Activated CD8-positive, alpha-beta memory T cell treated with anti-CD3 and anti-CD28 coated beads, Interleukin-2, amount 10 ng/mL, durations not matched to agents 7 days and 5 days (primary cell): ENCODE measurements at regions of chr1 and their contacts with region 1.

Region 1: GRCh38 chr1:112390775-112391602 is 5.0 kb upstream of the CTTNBP2NL start:
- DNase-seq: peak; percentile 89
- ATAC-seq: peak; percentile 93
- H3K4me3 Mint-ChIP-seq: peak overlapping the region; percentile 76
- H3K27ac Mint-ChIP-seq: peak overlapping the region; percentile 72
- H3K4me1 Mint-ChIP-seq: peaks cover 48% of the 10 kb centered on the region
- H3K27me3 Mint-ChIP-seq: peaks cover 16% of the 10 kb centered on the region

Region 2: DNA sequence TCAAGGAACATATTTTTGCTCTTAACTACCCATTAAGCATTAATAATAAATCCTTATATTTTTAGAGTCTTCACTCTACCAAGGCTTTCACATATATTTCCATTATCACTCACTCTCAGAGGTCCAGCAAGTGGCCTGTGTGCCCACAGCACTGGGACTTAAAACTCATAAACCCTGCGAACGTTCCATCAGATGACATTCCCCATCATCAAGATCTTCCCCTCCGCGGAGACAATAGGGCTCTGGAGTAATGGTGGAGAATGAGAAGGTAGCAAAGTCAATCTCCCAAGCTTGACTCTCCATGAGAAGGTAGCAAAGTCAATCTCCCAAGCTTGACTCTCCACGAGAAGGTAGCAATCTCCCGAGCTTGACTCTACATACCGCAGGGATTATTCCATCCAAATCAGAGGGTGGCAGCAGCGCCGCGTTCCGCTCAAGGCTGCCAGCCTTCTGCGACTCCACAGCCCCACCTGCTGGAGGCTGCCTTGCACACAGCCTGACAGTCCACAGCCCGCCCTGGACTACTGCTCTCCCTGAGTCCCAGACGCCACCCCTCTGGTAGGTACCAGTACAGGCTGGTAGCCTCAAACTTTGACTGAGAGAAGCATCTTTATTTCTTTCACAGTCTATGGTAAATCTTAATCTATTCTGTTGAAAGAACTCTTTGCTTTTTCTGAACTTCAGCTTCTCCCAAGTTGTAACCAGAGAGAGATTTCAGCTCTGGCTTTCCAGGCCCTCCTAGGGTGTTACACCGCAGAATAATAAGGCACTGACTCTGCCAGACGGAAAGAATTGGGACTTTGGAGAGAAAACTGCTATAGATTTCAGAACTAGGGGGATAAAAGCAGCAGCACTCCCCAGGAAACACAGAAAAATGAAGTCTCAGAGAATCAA is 21.4 kb before region 1 on chr1:
- CTCF ChIA-PET with region 1: interaction called, 10 read pairs
- DNase-seq: peak; percentile 86
- ATAC-seq: peak; percentile 99
- H3K4me3 Mint-ChIP-seq: no peak overlapping the region
- H3K27ac Mint-ChIP-seq: no peak overlapping the region
- H3K4me1 Mint-ChIP-seq: peaks cover 4% of the 10 kb centered on the region
- H3K27me3 Mint-ChIP-seq: peaks cover 56% of the 10 kb centered on the region

Region 3: DNA sequence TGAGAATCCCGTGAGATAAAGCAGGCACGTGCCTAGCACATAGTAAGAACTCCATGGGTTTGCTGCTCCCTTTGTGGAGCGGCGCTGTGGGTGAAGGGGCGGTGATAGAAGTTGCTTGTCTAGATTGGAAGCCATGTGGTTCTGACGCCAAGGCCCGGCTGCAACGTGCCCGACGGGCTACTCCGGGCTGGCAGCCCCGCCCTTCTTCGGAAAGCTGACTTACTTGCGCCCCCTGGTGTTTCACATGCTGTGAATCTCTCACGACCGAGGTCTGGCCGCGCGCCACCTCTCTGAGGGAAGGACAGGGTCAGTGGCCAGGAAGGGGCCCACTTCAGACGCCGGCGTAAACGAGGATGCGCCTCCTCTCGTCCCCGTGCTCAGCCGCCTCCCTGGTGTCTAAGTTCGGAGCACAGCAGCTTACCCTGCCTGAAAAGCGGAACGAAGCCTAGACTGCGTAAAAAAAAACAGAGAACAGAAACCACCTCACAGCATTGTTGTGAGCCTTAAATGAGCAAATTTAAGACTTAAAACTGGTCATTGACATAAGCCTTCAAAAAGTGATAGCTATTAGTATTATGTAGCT is 75.2 kb after region 1 on chr1:
- CTCF ChIA-PET with region 1: interaction called, 171 read pairs
- DNase-seq: peak; percentile 90
- ATAC-seq: peak; percentile 98
- H3K4me3 Mint-ChIP-seq: peak overlapping the region; percentile 76
- H3K27ac Mint-ChIP-seq: peak overlapping the region; percentile 52
- H3K4me1 Mint-ChIP-seq: peaks cover 13% of the 10 kb centered on the region
- H3K27me3 Mint-ChIP-seq: peaks cover 25% of the 10 kb centered on the region

Region 4: DNA sequence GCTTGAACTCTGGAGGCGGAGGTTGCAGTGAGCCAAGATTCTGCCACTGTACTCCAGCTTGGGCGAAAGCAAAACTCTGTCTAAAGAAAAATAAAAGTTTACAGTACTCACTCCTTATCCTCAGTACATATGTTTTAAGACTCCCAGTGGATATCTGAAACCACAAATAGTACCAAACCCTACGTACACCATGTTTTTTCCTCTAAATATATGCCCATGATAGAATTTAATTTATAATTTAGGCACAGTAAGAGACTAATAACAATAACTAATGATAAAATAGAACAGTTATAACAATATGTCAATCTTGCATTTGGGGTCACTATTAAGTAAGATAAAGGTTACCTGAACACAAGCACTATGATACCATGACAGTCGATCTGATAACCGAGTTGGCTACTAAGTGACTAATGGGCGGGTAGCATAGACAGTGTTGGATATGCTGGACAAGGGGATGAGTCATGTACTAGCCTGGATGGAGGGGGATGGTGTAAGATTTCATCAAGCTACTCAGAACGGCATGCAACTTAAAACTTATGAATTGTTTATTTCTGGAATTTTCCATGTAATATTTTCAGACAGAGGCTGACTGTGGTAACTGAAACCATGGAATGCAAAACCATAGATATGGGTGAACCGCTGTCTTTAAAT is 184.3 kb after region 1 on chr1:
- CTCF ChIA-PET with region 1: no interaction called
- DNase-seq: no peak
- ATAC-seq: no peak
- H3K4me3 Mint-ChIP-seq: no peak overlapping the region
- H3K27ac Mint-ChIP-seq: no peak overlapping the region
- H3K4me1 Mint-ChIP-seq: no peaks in the 10 kb centered on the region
- H3K27me3 Mint-ChIP-seq: no peaks in the 10 kb centered on the region

Region 5: DNA sequence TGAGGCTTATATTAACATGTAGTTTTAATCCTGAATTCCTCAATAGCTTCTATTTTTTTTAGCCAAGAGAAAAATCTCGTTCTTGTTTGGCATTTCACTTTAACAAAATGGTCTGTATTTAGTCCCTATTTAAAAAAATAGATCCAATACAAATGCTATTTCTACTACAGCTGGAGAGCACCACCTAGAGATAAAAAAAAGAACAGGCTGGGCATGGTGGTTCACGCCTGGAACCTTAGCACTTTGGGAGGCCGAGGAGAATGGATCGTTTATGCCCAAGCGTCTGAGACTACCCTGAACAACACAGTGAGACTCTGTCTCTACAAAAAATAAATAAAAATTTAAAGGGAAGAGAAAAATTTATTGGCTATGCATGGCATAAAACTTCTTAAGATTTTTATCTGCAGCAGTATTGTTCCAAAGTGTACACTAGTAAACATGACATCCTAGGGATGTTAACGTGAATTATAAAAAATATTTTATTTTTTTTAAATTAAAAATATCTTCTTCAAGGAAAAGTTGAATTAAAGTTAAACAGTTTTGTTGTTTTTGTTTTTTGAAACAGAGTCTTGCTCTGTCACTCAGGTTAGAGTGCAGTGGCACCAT is 223.6 kb after region 1 on chr1:
- CTCF ChIA-PET with region 1: interaction called, 38 read pairs
- DNase-seq: no peak
- ATAC-seq: no peak
- H3K4me3 Mint-ChIP-seq: no peak overlapping the region
- H3K27ac Mint-ChIP-seq: no peak overlapping the region
- H3K4me1 Mint-ChIP-seq: peaks cover 30% of the 10 kb centered on the region
- H3K27me3 Mint-ChIP-seq: no peaks in the 10 kb centered on the region

Region 6: GRCh38 chr1:112688781-112689193 is 297.8 kb after region 1 on chr1:
- CTCF ChIA-PET with region 1: no interaction called
- DNase-seq: no peak
- ATAC-seq: no peak
- H3K4me3 Mint-ChIP-seq: no peak overlapping the region
- H3K27ac Mint-ChIP-seq: no peak overlapping the region
- H3K4me1 Mint-ChIP-seq: peaks cover 10% of the 10 kb centered on the region
- H3K27me3 Mint-ChIP-seq: no peaks in the 10 kb centered on the region

Region 7: GRCh38 chr1:112715264-112716053 is 324.5 kb after region 1 on chr1 and contains the start of gene PPM1J:
- CTCF ChIA-PET with region 1: interaction called, 23 read pairs
- DNase-seq: peak; percentile 99
- ATAC-seq: peak; percentile 93
- H3K4me3 Mint-ChIP-seq: peak within 1 kb of the TSS; percentile 80
- H3K27ac Mint-ChIP-seq: peak within 1 kb of the TSS; percentile 69
- H3K4me1 Mint-ChIP-seq: peaks cover 24% of the 10 kb centered on the region
- H3K27me3 Mint-ChIP-seq: peaks cover 40% of the 10 kb centered on the region
- total RNA-seq, gene PPM1J: 0.26 TPM in 1 of 2 experiments, not detected in the other